MCF 10A (cell line): ENCODE measurements at regions of chr6 and their contacts with region 1.

Region 1: DNA sequence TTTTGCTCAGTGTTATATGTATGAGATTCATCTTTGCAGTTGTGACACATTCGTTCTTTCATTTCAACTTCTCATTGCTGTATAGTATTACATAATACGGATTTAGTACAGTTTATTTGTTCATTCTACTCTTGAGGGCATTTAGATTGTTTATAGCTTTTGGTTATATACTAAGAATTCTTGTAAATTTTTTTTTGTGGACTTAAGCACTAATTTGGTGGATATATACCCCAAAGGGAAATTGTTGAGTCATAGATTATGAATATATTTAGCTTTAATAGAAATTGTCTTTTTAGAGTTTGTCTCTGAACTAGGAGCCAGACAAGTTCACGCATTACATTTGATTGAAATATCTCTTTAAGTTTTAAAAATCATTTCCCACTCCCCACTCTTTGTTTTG is 79.6 kb downstream of the DNAH8 start:
- DNase-seq: no peak
- H3K4me3 Mint-ChIP-seq: no peak overlapping the region
- H3K27ac Mint-ChIP-seq: no peak overlapping the region
- H3K4me1 Mint-ChIP-seq: peaks cover 20% of the 10 kb centered on the region
- H3K27me3 Mint-ChIP-seq: no peaks in the 10 kb centered on the region
- CTCF ChIP-seq: no peak

Region 2: GRCh38 chr6:38933432-38933831 is 138.8 kb after region 1 on chr6:
- CTCF ChIA-PET with region 1: no interaction called
- POLR2A ChIA-PET with region 1: no interaction called
- intact Hi-C with region 1: loop called (anchors 2 kb)
- DNase-seq: peak; percentile 47
- H3K4me3 Mint-ChIP-seq: no peak overlapping the region
- H3K27ac Mint-ChIP-seq: no peak overlapping the region
- H3K4me1 Mint-ChIP-seq: no peaks in the 10 kb centered on the region
- H3K27me3 Mint-ChIP-seq: peaks cover 36% of the 10 kb centered on the region
- CTCF ChIP-seq: peak; percentile 33

Region 3: DNA sequence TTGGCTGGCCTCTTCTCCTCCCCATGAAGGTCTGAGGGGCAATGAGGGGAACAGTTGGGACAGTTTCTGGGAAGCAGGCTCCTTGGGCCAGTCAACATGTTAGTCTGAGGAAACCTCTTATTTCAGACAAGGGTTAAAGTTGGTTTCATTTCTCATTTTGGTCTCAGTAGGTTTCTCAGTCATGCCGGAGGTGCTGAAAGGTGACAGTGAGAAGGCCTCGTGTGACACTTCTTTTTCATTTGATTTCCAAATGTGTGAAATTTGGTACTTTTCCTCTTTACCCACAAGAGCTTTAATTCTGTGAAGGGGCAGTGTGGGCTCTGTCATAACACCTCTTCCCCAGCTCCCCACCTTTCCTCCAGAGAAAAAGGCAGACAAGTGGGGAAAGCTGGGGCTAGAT is 246.4 kb after region 1 on chr6:
- CTCF ChIA-PET with region 1: no interaction called
- POLR2A ChIA-PET with region 1: no interaction called
- intact Hi-C with region 1: no loop called
- DNase-seq: no peak
- H3K4me3 Mint-ChIP-seq: no peak overlapping the region
- H3K27ac Mint-ChIP-seq: no peak overlapping the region
- H3K4me1 Mint-ChIP-seq: no peaks in the 10 kb centered on the region
- H3K27me3 Mint-ChIP-seq: peaks cover 31% of the 10 kb centered on the region
- CTCF ChIP-seq: no peak